Heart left ventricle (tissue), 16 donors: ENCODE measurements at regions of chr4 and their contacts with region 1.

Region 1: GRCh38 chr4:104860238-104861123 is 286.2 kb upstream of the TET2 start:
- DNase-seq: peak in 3 of 5 donors; percentile 11 to 35 (median 22)
- ATAC-seq: peak; percentile 67 to 83 (median 75)
- H3K4me3 ChIP-seq: peak overlapping the region in 7 of 12 donors; percentile 28 to 44 (median 38)
- H3K27ac ChIP-seq: no peak overlapping the region
- H3K4me1 ChIP-seq: peaks cover 0 to 5% (median 0%) of the 10 kb centered on the region in 12 donors
- H3K27me3 ChIP-seq: no peaks in the 10 kb centered on the region
- CTCF ChIP-seq: peak; percentile 75 to 93 (median 88)
- POLR2A ChIP-seq: no peak

Region 2: DNA sequence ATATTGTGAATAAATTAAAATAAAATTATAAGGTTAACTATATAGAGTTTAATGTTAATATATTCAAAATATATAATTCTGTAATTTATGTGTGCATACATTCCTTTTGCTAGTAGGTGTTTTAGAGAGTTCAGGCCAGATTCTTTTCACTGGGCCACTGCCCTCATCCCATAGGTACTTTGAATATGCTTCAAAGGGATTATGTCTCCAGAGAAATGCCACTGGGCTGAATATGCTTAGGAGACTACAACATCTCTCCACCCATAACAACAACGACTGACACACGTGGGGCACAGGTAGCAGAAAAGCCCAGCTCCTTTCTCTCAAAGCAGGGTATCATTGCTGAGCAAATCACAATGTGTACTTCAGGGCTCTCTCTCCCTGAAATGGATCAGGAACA is 849.8 kb before region 1 on chr4:
- intact Hi-C with region 1: loop called in 2 of 10 experiments (anchors 5 kb)
- DNase-seq: no peak
- ATAC-seq: no peak
- H3K4me3 ChIP-seq: no peak overlapping the region
- H3K27ac ChIP-seq: no peak overlapping the region
- H3K4me1 ChIP-seq: no peaks in the 10 kb centered on the region
- H3K27me3 ChIP-seq: no peaks in the 10 kb centered on the region
- CTCF ChIP-seq: no peak
- POLR2A ChIP-seq: no peak

Region 3: GRCh38 chr4:104015680-104016253 is 844.7 kb before region 1 on chr4:
- intact Hi-C with region 1: loop called in 2 of 10 experiments (anchors 5 kb)
- DNase-seq: no peak
- ATAC-seq: no peak
- H3K4me3 ChIP-seq: no peak overlapping the region
- H3K27ac ChIP-seq: no peak overlapping the region
- H3K4me1 ChIP-seq: no peaks in the 10 kb centered on the region
- H3K27me3 ChIP-seq: no peaks in the 10 kb centered on the region
- CTCF ChIP-seq: peak in 9 of 12 donors; percentile 6 to 46 (median 20)
- POLR2A ChIP-seq: no peak

Region 4: GRCh38 chr4:104064646-104065577 is 795.6 kb before region 1 on chr4:
- intact Hi-C with region 1: loop called in 9 of 10 experiments (anchors 2 to 10 kb)
- DNase-seq: peak in 3 of 5 donors; percentile 16 to 45 (median 25)
- ATAC-seq: peak in 3 of 4 donors; percentile 63 to 70 (median 69)
- H3K4me3 ChIP-seq: no peak overlapping the region
- H3K27ac ChIP-seq: no peak overlapping the region
- H3K4me1 ChIP-seq: no peaks in the 10 kb centered on the region
- H3K27me3 ChIP-seq: no peaks in the 10 kb centered on the region
- CTCF ChIP-seq: peak in 11 of 12 donors; percentile 27 to 63 (median 48)
- POLR2A ChIP-seq: no peak

Region 5: DNA sequence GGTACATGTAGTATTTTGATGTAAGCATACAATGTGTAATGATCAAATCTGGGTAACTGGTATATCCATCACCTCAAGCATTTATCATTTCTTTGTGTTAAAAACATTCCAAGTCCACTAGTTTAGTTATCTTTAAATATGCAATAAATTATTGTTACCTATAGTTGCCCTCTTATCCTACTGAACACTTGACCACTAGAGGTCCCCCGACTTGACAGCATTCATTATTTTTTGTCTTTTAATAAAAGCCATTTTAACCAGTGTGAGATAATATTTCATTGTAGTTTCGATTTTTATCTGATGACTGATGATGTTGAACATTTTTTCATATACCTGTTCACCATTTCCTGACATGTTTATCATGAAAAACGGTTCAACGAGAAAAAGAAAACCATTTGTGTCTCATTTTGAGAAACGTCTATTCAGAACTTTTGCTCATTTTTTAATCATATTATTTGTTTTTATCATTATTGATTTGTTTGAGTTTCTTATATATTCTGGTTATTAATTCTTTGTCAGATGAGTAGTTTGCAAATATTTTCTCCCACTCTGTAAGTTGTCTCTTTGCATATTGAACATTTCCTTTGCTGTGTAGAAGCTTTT is 166.8 kb before region 1 on chr4:
- intact Hi-C with region 1: loop called in 6 of 10 experiments (anchors 2 to 10 kb)
- DNase-seq: no peak
- ATAC-seq: no peak
- H3K4me3 ChIP-seq: no peak overlapping the region
- H3K27ac ChIP-seq: no peak overlapping the region
- H3K4me1 ChIP-seq: no peaks in the 10 kb centered on the region
- H3K27me3 ChIP-seq: no peaks in the 10 kb centered on the region
- CTCF ChIP-seq: peak in 11 of 12 donors; percentile 8 to 50 (median 35)
- POLR2A ChIP-seq: no peak